Activated CD4-positive, alpha-beta memory T cell treated with anti-CD3 and anti-CD28 coated beads for 36 hours (primary cell): ENCODE measurements at regions of chr10 and their contacts with region 1.

Region 1: DNA sequence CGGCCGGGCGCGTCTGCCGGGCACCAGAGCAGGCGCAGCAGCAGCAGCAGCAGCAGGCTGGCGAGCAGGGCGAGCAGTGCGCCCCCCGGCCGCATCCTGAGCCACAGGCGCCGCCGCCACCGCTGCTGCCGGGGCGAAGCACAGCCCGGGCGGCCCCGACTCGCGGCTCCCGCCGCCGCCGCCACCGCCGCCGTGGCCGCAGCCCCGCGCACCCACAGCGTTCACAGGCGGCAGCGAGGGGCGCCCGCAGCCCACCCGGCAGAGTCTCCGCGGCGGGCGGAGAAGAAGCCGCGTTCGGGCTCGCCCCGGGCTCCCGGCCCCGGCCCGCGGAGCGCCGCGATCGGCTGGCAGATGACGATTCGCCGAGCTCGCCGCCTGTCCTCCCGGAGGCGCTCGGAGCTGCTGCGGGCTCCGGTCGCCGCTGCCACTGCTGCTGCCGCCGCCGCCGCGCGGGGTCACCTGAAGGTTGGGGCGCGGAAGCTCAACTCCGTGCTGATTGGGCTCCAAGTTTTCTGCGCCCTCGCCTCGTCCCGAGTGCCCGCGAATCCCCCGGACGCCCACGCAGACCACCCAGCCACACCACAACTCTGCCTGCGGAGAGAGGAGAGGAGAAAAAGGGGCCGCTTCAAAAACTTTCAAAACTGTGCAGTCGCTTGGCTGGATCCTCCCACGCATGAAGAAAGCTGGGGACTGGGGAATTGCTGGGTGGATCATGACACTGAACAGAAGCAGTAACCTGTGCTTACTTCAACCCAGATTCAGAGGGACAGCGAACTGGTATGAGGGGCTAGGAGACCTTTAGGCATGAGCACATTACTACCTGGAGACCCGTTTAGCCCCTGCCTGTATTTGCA is at the start of gene ST8SIA6:
- DNase-seq: peak; percentile 58
- H3K4me3 Mint-ChIP-seq: peak within 1 kb of the TSS; percentile 78
- H3K27ac Mint-ChIP-seq: no peak within 1 kb of the TSS
- H3K4me1 Mint-ChIP-seq: peaks cover 13% of the 10 kb centered on the region
- H3K27me3 Mint-ChIP-seq: peaks cover 9% of the 10 kb centered on the region
- total RNA-seq, gene ST8SIA6: 0.38 TPM in 1 of 2 experiments, not detected in the other

Region 2: DNA sequence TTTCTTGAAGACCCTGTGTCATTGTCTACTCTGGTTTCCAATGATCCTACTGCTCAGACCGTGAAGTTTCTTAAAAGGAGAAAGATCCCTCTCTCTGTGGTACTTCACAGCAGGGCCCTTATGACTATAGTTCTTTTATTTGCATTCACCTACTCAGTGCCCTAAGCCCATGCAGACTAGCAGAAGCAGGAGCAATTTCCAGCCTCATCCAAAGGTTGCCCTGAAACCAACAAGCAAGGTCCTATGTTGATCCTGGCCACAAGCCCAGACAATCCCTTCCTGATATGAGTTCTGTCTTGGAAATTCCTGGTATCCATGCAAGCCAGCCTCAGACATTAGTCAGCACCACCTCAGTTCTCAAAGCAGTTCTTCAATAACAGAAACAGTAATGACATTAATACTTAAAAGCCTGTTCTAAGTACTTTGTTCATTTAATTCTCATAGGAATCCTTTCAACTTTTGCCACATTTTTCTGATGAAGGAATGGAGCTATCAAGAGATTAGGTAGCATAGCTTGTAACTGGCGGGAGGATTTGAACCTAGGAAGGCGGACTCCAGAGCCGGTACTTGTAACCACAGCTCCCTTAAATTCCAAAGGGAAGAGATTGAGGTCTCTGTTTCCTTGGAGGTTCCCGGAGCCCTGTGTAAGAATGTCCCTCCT is 58.1 kb after region 1 on chr10:
- CTCF ChIA-PET with region 1: no interaction called
- POLR2A ChIA-PET with region 1: interaction called, 5 read pairs
- intact Hi-C with region 1: loop called (anchors 2 kb)
- DNase-seq: no peak
- H3K4me3 Mint-ChIP-seq: no peak overlapping the region
- H3K27ac Mint-ChIP-seq: peak overlapping the region; percentile 64
- H3K4me1 Mint-ChIP-seq: peaks cover 35% of the 10 kb centered on the region
- H3K27me3 Mint-ChIP-seq: no peaks in the 10 kb centered on the region